PC-3 (cell line): ENCODE measurements at regions of chr14 and their contacts with region 1.

Region 1: GRCh38 chr14:64671591-64671990 is 32.6 kb upstream of the PLEKHG3 start:
- DNase-seq: peak; percentile 78
- ATAC-seq: peak; percentile 73
- H3K4me3 ChIP-seq: no peak overlapping the region
- H3K27ac ChIP-seq: no peak overlapping the region
- H3K4me1 ChIP-seq: peaks cover 16% of the 10 kb centered on the region
- H3K27me3 ChIP-seq: no peaks in the 10 kb centered on the region
- CTCF ChIP-seq: peak; percentile 93

Region 2: DNA sequence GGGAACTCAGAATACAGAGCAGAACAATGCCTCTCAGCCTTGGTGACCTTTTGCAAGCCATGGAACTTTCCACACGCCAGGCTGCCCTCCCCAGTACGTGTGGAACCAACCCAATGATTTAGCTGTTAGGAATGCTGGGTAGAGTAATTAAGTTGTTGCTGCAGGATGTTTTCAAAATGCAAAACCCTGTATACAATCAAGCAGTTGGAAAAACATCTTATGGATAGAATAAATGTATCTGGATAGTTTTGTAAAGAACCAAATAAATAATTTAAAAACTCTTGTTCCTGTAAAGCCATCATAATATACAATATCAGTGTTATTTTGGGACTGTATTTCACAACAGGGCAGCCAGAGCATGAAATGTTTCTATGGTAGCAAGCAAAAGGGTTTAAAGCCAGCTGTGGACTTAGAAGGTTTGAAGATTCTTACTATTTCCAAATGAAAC is 102.4 kb before region 1 on chr14:
- CTCF ChIA-PET with region 1: no interaction called
- POLR2A ChIA-PET with region 1: no interaction called
- intact Hi-C with region 1: no loop called
- DNase-seq: peak; percentile 63
- ATAC-seq: peak; percentile 91
- H3K4me3 ChIP-seq: no peak overlapping the region
- H3K27ac ChIP-seq: no peak overlapping the region
- H3K4me1 ChIP-seq: peaks cover 11% of the 10 kb centered on the region
- H3K27me3 ChIP-seq: no peaks in the 10 kb centered on the region
- CTCF ChIP-seq: no peak

Region 3: GRCh38 chr14:64720131-64720576 is 48.6 kb after region 1 on chr14:
- CTCF ChIA-PET with region 1: interaction called, 4 read pairs
- POLR2A ChIA-PET with region 1: interaction called, 5 read pairs
- intact Hi-C with region 1: loop called (anchors 2 kb)
- DNase-seq: peak; percentile 98
- ATAC-seq: peak; percentile 94
- H3K4me3 ChIP-seq: peak overlapping the region; percentile 16; the same call in 1 of the 2 replicates
- H3K27ac ChIP-seq: peak overlapping the region; percentile 93
- H3K4me1 ChIP-seq: peaks cover 76% of the 10 kb centered on the region
- H3K27me3 ChIP-seq: no peaks in the 10 kb centered on the region
- CTCF ChIP-seq: no peak

Region 4: DNA sequence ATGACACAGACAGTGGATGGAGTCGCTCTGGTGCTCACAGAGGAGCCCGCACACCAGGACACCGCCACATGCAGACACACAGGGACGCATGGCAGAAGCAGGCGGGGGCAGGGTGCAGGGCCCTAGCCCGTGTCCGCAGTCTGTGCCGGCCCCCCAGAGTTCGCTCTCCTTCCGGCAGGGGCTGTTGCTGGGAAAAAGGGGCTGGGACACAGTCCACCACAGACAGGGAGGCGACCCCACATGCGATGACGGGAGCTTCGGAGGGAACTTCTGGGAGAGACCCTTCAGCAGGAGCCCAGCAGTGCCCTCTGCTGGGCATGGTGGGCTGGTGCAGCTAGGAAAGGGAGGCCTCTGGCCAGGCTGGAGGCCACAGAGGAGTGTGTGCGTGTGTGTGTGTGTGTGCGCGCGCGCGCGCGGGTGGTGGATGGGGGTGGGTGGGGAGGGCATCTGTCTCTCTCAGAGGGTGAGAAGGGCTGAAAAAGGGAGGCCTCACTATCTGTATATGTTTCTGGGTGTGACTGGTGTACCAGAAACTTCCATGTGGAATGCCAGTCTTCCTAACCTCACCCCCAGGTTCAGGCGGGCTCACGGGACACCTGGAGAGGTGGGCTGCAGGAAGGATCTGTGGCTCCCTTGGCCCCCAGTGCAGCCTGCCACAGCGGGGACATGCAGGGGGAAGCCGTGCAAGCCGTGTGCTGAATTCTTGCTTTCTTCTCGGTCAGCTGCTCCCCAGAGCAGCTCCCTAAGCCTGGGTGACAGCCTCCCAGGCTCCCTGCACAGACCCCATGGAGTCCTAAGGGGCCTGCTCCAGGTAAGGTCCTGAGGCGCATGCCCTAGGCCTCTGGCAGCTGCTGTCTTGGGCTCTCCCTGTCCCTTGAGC is 93.3 kb after region 1 on chr14:
- CTCF ChIA-PET with region 1: interaction called, 6 read pairs
- POLR2A ChIA-PET with region 1: no interaction called
- intact Hi-C with region 1: loop called (anchors 1 kb)
- DNase-seq: peak; percentile 92
- ATAC-seq: peak; percentile 48
- H3K4me3 ChIP-seq: peak overlapping the region; percentile 31; the same call in 1 of the 2 replicates
- H3K27ac ChIP-seq: no peak overlapping the region
- H3K4me1 ChIP-seq: peaks cover 49% of the 10 kb centered on the region
- H3K27me3 ChIP-seq: no peaks in the 10 kb centered on the region
- CTCF ChIP-seq: peak; percentile 86

Region 5: DNA sequence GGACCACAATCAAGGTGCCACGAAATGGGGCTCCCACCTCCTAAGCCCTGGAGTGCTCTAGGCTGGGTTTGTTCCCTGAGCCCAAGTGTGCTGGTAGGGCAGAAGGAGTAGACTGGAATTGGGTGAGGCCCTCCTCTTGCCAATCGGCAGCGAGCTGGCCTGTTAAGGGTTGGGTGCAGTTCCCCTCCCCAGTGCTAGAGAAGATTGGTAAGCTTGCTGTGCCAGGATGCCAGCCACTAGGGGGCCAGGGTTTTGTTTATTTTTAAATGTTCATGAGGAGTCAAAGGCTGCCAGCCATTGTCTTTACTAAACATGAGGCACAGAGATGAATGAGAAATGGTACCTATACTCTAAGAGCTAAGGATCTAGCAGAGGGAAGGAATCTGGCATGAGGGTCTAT is 128.4 kb after region 1 on chr14:
- CTCF ChIA-PET with region 1: interaction called, 23 read pairs
- POLR2A ChIA-PET with region 1: no interaction called
- intact Hi-C with region 1: loop called (anchors 1 kb)
- DNase-seq: peak; percentile 69
- ATAC-seq: peak; percentile 55
- H3K4me3 ChIP-seq: no peak overlapping the region
- H3K27ac ChIP-seq: no peak overlapping the region
- H3K4me1 ChIP-seq: peaks cover 10% of the 10 kb centered on the region
- H3K27me3 ChIP-seq: no peaks in the 10 kb centered on the region
- CTCF ChIP-seq: peak; percentile 91